ENCODE measurements at regions of chr17 and their contacts with region 1.

Region 1: GRCh38 chr17:39376434-39376833 is 25.0 kb downstream of the FBXL20 start:
- DNase-seq: no peak
- ATAC-seq: no peak
- H3K4me3 ChIP-seq: no peak overlapping the region
- H3K27ac ChIP-seq: no peak overlapping the region
- H3K4me1 ChIP-seq: peaks cover 2% of the 10 kb centered on the region; the same call in 1 of the 2 replicates
- H3K27me3 ChIP-seq: no peaks in the 10 kb centered on the region
- CTCF ChIP-seq: no peak
- POLR2A ChIP-seq: no peak
- RAD21 ChIP-seq: no peak

Region 2: GRCh38 chr17:39401412-39402243 is 25.2 kb after region 1 on chr17 and contains the start of gene FBXL20:
- CTCF ChIA-PET with region 1: no interaction called
- POLR2A ChIA-PET with region 1: interaction called, 25 read pairs
- dilution Hi-C with region 1: no loop called
- in situ Hi-C with region 1: no loop called
- intact Hi-C with region 1: no loop called
- DNase-seq: peak; percentile 84
- ATAC-seq: peak; percentile 78
- H3K4me3 ChIP-seq: peak within 1 kb of the TSS; percentile 100
- H3K27ac ChIP-seq: peak within 1 kb of the TSS; percentile 87
- H3K4me1 ChIP-seq: peaks cover 7% of the 10 kb centered on the region
- H3K27me3 ChIP-seq: no peaks in the 10 kb centered on the region
- CTCF ChIP-seq: no peak
- POLR2A ChIP-seq: peak; percentile 90
- RAD21 ChIP-seq: no peak
- total RNA-seq, gene FBXL20: 12.2 and 13.8 TPM in 2 replicates